Breast epithelium (tissue), 4 donors: ENCODE measurements at regions of chr12 and their contacts with region 1.

Region 1: DNA sequence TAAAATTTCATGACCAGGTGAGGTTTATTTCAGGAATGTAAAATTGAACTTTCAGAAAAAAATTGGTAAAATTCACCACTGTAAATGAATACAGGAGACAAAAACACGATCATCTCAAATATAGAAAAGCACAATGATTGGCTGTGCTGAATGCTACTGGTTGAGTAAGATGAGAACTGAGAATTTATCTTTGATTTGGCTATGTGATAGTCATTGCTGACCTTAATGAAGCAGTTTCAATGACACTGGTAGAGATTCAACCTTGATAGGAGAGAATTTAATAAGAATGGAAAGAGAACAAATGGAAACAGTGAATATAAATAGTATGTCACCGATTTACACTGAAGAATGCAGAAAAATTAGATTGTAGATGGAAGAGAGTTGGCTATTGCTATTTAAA is 6.4 kb upstream of the PMCH start:
- DNase-seq: no peak
- H3K4me3 ChIP-seq: no peak overlapping the region
- H3K27ac ChIP-seq: no peak overlapping the region
- H3K4me1 ChIP-seq: no peaks in the 10 kb centered on the region
- H3K27me3 ChIP-seq: no peaks in the 10 kb centered on the region
- CTCF ChIP-seq: no peak
- POLR2A ChIP-seq: no peak

Region 2: DNA sequence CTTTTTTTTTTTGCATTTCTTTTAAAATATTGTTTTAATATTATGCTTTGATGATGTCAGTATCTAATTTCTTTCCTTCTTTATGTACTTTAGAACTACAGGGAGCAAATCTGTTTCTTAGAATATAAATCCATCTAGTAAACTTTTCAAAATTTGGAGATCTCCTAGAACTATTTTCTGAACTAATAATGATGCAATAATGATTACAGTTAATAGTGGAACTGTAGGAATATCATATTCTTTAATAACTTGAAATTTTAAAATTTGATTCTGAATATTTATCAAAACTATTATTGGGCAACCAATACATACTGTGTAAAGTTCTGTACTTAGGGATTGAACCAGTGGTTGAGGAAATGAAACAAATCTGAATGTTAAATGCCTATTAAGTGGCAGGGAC is 16.7 kb after region 1 on chr12:
- intact Hi-C with region 1: no loop called
- DNase-seq: no peak
- H3K4me3 ChIP-seq: no peak overlapping the region
- H3K27ac ChIP-seq: no peak overlapping the region
- H3K4me1 ChIP-seq: no peaks in the 10 kb centered on the region
- H3K27me3 ChIP-seq: no peaks in the 10 kb centered on the region
- CTCF ChIP-seq: no peak
- POLR2A ChIP-seq: no peak

Region 3: DNA sequence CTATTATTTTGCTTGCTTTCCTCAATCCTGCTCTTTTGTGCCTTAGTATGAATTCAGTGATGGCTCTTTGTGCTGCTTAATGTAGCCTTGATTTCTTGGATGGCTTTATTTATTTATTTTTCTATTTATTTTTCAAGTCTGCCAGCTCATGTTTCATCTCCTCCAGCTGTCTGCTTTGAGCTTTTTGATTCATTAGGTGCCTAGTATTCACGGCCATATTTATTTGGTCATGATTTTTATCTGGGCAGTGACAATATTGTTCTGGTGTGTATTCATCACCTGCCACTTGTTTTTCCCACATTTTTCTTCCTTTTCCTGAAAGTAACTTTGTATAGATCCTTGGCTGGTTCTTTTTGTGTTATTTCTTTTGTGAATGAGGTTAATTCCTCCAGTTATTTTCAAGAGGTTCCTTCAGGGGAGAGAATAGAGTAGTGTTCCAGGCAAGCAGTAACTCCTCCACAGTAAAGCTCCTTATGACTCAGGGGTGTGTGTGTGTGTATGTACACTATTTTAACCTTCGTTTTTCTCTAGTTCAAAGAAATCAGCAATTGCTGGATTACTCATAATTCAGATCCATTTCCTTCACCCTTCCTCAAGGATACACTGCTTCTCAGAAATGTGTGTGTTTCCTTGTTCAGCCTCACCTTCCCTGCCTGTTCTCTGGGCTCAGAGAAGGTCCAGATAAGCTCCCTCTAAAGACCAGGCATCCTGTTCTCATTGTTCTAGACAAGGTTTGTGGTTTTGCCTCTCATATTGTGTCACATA is 45.2 kb after region 1 on chr12:
- intact Hi-C with region 1: loop called (anchors 1 kb)
- DNase-seq: no peak
- H3K4me3 ChIP-seq: no peak overlapping the region
- H3K27ac ChIP-seq: no peak overlapping the region
- H3K4me1 ChIP-seq: no peaks in the 10 kb centered on the region
- H3K27me3 ChIP-seq: no peaks in the 10 kb centered on the region
- CTCF ChIP-seq: no peak
- POLR2A ChIP-seq: no peak